Left ventricle myocardium superior (tissue), 1 donor: ENCODE measurements at regions of chr3 and their contacts with region 1.

Region 1: DNA sequence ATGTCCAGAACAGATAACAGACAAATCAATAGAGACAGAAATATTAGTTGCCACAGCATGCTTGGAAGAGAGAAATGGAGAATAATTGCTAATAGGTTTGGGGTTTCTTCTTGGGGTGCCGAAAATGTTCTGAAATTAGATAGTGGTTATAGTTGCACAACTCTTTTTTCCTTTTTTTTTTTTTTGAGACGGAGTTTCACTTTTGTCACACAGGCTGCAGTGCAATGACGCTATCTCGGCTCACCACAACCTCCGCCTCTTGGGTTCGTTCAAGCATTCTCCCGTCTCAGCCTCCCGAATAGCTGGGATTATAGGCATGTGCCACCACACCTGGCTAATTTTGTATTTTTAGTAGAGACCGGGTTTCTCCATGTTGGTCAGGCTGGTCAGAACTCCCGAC is 163.3 kb downstream of the PLCH1 start:
- DNase-seq: no peak
- ATAC-seq: no peak

Region 2: DNA sequence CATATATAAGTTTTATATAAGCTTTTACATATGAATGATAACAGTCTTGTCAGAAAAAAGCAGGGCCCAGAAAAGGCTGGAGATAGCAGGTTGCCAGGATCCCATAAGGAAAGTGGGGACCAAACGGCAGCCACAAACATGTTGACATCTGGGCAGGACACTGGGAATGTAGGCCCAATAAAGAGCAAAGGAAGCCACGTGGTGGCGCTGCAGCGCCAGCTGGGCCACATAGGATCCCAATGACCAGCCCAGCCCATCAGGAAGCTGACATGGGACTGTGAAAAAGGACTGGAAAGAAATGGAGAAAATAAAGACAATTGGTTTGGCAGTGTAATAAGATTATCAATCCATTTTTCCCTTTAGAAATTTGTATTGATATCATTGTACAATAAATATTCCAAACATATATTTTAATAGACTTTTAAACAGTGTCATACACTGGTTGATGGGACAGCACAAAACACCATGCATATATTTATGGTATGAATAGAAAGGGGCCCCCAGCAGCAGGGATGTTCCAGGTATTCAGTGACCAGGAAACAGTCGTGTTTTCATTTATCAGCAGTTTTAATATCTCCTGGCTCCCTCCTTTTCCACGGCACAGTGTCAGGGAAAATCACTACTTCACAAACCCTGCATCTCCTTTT is 199.1 kb before region 1 on chr3:
- intact Hi-C with region 1: loop called (anchors 10 kb)
- DNase-seq: peak; percentile 91
- ATAC-seq: peak; percentile 89

Region 3: DNA sequence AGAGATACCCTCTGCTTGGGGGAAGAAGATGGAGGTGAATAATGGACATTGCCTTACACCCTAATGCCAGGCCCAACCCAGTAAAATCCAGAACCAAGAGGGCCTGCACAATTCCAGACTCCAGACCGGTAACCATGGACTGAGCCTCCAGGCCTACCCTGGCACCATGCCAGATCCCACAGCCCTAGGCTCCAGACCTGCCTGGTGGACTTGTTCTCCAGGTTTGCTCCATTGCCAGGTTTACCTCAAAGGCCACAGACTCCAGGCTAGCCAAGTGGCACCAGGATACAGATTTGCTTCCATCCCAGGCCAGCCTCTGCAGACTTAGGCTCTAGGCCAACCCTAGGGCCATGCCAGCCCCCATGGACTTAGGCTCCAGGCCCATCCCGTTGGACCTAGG is 149.3 kb after region 1 on chr3:
- intact Hi-C with region 1: no loop called
- DNase-seq: no peak
- ATAC-seq: no peak